Activated T-helper 1 cell treated with anti-CD3 and anti-CD28 coated beads, Interleukin-12 subunit alpha, Interleukin-12 subunit beta, Interleukin-2, Interleukin-4 antibody, amounts not matched to agents 30 ng/mL and 10 ng/mL and 1 ng/mL, durations not matched to agents 14 hours and 24 hours and 36 hours (primary cell): ENCODE measurements at regions of chr20 and their contacts with region 1.

Region 1: DNA sequence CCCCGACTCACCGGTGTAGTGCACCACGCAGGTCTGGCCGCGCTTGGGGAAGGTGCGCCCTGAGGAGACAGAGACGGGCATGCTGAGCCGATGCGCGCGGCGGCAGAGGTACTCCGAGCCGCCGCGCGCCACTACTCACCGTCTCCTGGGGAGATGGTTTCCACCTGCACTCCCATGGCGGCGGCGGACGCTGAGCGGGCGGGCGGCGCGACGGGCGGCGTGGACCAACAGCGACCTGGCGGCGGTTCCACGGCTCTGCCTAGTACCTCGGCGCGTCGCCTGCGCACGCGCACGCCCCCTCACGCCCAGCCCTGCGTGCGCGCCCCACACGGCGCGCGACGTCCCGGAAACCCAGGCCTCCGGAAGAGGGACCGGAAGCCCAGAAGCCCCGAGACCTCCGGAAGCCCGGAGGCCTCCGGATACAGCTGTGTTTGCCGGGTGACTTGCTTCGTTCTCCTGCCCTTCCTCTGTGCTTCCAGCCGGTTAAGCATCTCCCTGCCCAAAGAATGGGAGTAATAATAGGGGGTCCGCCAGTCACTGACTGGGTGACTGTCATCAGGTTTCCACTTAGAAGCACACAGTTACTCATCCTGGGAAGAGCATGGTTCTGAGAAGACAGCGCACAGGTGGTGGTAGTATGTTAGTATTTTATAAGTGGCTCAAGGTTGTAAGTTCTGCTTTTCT is at the start of gene FKBP1A:
- DNase-seq: peak; percentile 89
- H3K4me3 Mint-ChIP-seq: peak within 1 kb of the TSS; percentile 94
- H3K27ac Mint-ChIP-seq: peak within 1 kb of the TSS; percentile 92
- H3K4me1 Mint-ChIP-seq: peaks cover 65% of the 10 kb centered on the region
- H3K27me3 Mint-ChIP-seq: peaks cover 18% of the 10 kb centered on the region
- total RNA-seq, gene FKBP1A: 295 and 297 TPM in 2 replicates

Region 2: GRCh38 chr20:1118336-1119127 is 274.4 kb before region 1 on chr20 and contains the start of gene PSMF1:
- intact Hi-C with region 1: loop called (anchors 2 kb)
- DNase-seq: peak; percentile 95
- H3K4me3 Mint-ChIP-seq: peak within 1 kb of the TSS; percentile 91
- H3K27ac Mint-ChIP-seq: peak within 1 kb of the TSS; percentile 81
- H3K4me1 Mint-ChIP-seq: peaks cover 56% of the 10 kb centered on the region
- H3K27me3 Mint-ChIP-seq: no peaks in the 10 kb centered on the region
- total RNA-seq, gene PSMF1: 185 and 189 TPM in 2 replicates

Region 3: GRCh38 chr20:1225783-1226654 is 166.9 kb before region 1 on chr20 and contains the start of gene RAD21L1:
- intact Hi-C with region 1: loop called (anchors 1 kb)
- DNase-seq: peak; percentile 57
- H3K4me3 Mint-ChIP-seq: peak within 1 kb of the TSS; percentile 84
- H3K27ac Mint-ChIP-seq: no peak within 1 kb of the TSS
- H3K4me1 Mint-ChIP-seq: peaks cover 7% of the 10 kb centered on the region
- H3K27me3 Mint-ChIP-seq: peaks cover 36% of the 10 kb centered on the region
- total RNA-seq, gene RAD21L1: not detected in 2 replicates

Region 4: GRCh38 chr20:1313236-1313964 is 79.6 kb before region 1 on chr20:
- intact Hi-C with region 1: loop called (anchors 1 kb)
- DNase-seq: peak; percentile 47
- H3K4me3 Mint-ChIP-seq: no peak overlapping the region
- H3K27ac Mint-ChIP-seq: no peak overlapping the region
- H3K4me1 Mint-ChIP-seq: peaks cover 16% of the 10 kb centered on the region
- H3K27me3 Mint-ChIP-seq: peaks cover 13% of the 10 kb centered on the region

Region 5: DNA sequence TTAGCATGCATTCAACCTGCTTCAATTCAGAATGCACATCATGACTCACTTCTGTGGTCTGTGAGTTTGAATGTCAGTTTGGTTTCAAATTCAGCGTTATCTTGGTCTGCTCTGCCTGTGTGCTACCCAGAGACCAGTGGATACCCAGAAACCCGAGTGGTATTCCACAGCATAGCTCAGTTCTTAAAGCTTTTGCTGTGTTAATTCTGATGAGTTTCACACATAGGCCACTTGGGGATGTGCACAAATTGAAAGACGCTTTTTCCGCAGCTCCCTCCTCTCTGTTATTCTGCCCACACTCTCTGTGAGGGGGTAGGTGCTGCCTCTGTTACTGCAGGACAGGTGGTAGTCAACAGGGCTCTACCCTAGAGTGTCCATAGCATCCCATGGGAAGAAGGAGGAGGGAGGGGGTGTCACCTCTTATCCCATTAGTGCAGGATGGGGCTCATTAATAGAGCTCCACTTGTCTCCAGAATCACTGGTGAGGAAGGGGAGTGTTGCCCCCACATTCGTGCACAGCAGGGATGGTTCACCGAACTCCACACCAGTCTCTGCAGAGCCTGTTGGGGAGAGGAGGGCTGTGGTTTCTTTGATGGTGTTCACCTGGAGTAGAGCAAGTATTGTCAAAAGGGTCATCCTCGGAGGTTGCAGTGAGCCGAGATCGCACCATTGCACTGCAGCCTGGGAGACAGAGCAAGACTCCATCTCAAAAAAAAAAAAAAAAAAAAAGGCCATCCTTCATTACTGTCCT is 34.9 kb before region 1 on chr20:
- intact Hi-C with region 1: loop called (anchors 1 kb)
- DNase-seq: peak; percentile 60
- H3K4me3 Mint-ChIP-seq: peak overlapping the region; percentile 68
- H3K27ac Mint-ChIP-seq: peak overlapping the region; percentile 88
- H3K4me1 Mint-ChIP-seq: peaks cover 62% of the 10 kb centered on the region
- H3K27me3 Mint-ChIP-seq: no peaks in the 10 kb centered on the region

Region 6: DNA sequence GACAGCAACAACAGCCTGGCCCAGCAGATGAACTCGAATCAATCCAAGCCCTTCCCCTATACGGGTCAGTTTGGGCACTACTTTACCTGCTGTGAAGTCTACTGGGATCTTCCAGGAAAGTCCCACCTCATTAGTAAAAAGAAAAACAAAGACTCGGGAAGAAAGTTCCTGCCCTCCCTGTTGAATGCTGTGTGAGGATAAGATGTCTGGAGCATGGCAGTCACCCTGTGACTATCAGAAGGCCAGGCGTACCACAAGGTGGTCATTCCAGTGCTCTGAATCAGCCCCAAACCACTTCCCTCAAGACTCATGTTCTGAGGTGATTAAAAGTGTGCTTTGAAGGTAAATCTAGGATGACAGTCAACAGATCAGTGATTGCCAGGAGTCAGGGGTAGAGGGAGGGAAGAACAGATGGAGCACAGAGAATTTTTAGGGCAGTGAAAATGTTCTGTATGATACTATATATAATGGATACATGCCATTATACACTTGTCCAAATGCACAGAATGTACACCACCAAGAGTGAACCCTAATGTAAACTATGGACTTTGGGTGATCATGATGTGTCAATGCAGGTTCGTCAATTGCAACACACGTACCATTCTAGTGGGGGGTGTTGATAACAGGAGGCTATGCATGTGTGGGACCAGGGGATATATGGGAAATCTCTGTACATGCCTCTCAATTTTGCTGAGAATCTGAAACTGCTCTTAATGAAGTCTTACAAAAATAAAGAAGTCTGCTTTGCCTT is 14.8 kb before region 1 on chr20:
- intact Hi-C with region 1: loop called (anchors 1 kb)
- DNase-seq: no peak
- H3K4me3 Mint-ChIP-seq: no peak overlapping the region
- H3K27ac Mint-ChIP-seq: peak overlapping the region; percentile 81
- H3K4me1 Mint-ChIP-seq: peaks cover 89% of the 10 kb centered on the region
- H3K27me3 Mint-ChIP-seq: no peaks in the 10 kb centered on the region

Region 7: GRCh38 chr20:1466211-1467081 is 73.5 kb after region 1 on chr20 and contains the start of gene NSFL1C:
- intact Hi-C with region 1: loop called (anchors 1 kb)
- DNase-seq: peak; percentile 97
- H3K4me3 Mint-ChIP-seq: peak within 1 kb of the TSS; percentile 90
- H3K27ac Mint-ChIP-seq: peak within 1 kb of the TSS; percentile 82
- H3K4me1 Mint-ChIP-seq: peaks cover 45% of the 10 kb centered on the region
- H3K27me3 Mint-ChIP-seq: peaks cover 12% of the 10 kb centered on the region
- total RNA-seq, gene NSFL1C: 108 and 111 TPM in 2 replicates